ENCODE measurements at regions of chr4 and their contacts with region 1.

Region 1: DNA sequence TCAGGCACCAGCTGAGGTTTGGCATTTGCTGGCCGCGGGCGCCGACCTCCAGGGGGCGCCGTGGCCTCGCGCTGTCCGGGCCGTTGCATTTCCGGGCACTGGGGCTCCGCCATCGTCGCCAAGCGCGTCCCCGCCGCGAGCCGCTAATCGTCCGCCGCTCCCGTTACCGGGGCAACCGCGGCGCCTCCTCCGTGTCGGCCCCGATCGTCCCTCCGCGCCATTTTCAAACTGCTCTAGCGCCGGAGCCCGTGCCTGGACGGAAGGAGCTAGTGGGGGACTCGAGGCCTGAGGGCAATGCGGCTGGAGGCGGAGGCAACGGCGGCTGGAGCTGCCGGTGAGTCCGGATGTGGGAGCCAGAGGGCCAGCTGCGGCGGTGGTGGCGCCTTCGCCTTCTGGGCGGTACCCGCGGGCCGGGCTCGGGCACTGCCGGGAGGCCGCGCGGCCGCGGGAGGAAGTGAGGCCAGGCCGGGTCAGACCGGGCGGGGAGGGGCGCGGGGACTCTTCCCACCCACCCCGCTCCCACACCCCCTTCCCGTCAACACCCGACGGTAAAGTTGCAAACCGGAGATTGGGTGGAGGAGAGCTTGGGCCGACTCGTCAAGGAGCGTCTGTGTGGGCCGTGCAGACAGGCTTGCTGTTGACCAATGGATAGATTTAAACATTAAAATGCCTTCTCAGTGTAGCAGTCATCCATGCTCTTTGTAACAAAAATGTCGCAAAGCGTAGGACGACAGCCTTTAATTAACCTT is at the start of gene CEP135:
- DNase-seq: peak; percentile 79 to 87
- ATAC-seq: peak; percentile 92 to 94
- H3K4me3 ChIP-seq: peak within 1 kb of the TSS; percentile 64 to 88 (median 78)
- H3K27ac ChIP-seq: peak within 1 kb of the TSS; percentile 63 to 83 (median 78)
- H3K4me1 ChIP-seq: peaks cover 14 to 16% of the 10 kb centered on the region in 2 donors
- H3K27me3 ChIP-seq: no peaks in the 10 kb centered on the region
- CTCF ChIP-seq: peak; percentile 78 to 97 (median 89)
- POLR2A ChIP-seq: peak in 1 of 2 donors; percentile 37
- total RNA-seq, gene CEP135: 0.71 to 1.3 (median 1.1) TPM

Region 2: DNA sequence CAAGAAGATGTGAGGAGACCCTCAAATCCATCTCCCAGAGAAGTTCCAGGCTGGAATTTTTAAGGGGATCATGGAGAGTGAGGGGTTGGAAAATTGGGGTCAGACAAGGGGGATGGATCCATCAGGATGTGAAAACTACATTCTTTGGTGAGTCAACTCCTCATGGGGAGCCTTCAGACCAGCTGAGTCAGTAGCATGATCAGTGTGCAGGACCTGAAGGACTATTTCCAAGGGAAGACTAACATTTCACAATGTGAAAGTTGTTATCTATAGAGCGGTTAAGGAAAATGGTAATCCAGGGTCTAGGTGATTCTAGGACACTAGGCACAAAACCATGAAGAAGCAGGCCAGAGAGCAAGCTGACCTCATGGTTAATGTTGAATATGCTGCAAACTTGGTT is 38.8 kb before region 1 on chr4:
- in situ Hi-C with region 1: no loop called
- intact Hi-C with region 1: no loop called
- DNase-seq: no peak
- ATAC-seq: no peak
- H3K4me3 ChIP-seq: no peak overlapping the region
- H3K27ac ChIP-seq: no peak overlapping the region
- H3K4me1 ChIP-seq: no peaks in the 10 kb centered on the region
- H3K27me3 ChIP-seq: no peaks in the 10 kb centered on the region
- CTCF ChIP-seq: no peak
- POLR2A ChIP-seq: no peak

Region 3: DNA sequence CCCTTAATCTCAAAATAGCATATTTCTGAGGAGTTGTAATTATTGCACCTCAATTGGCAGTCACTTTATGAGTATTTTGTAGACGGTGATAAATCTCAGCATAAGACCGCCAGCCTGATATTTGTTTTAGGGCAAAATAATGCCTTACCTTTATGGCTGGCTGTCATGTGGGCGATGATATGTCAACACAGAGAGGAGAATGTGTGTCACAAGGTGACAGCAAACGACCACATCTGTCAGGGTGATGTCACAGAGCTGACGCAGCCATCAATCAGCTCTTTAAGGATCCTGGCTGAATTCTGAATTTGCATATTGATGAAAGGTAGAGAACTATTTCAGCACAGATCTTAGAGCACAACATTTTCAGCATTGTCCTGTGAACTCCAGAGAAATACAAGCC is 209.6 kb after region 1 on chr4:
- in situ Hi-C with region 1: no loop called
- intact Hi-C with region 1: no loop called
- DNase-seq: no peak
- ATAC-seq: no peak
- H3K4me3 ChIP-seq: no peak overlapping the region
- H3K27ac ChIP-seq: no peak overlapping the region
- H3K4me1 ChIP-seq: no peaks in the 10 kb centered on the region
- H3K27me3 ChIP-seq: no peaks in the 10 kb centered on the region
- CTCF ChIP-seq: no peak
- POLR2A ChIP-seq: no peak

Region 4: GRCh38 chr4:56301181-56302076 is 352.5 kb after region 1 on chr4:
- in situ Hi-C with region 1: loop called in 1 of 4 experiments (anchors 25 kb)
- intact Hi-C with region 1: loop called (anchors 2 kb)
- DNase-seq: peak in 1 of 2 donors; percentile 40
- ATAC-seq: peak; percentile 60 to 77
- H3K4me3 ChIP-seq: no peak overlapping the region
- H3K27ac ChIP-seq: no peak overlapping the region
- H3K4me1 ChIP-seq: peaks cover 0 to 4% of the 10 kb centered on the region in 2 donors
- H3K27me3 ChIP-seq: no peaks in the 10 kb centered on the region
- CTCF ChIP-seq: peak in 4 of 5 experiments; percentile 46 to 75 (median 49)
- POLR2A ChIP-seq: no peak

Measured in gastrocnemius medialis (tissue), 4 donors.